Motor neuron (in vitro differentiated cells): ENCODE measurements at regions of chr4 and their contacts with region 1.

Region 1: DNA sequence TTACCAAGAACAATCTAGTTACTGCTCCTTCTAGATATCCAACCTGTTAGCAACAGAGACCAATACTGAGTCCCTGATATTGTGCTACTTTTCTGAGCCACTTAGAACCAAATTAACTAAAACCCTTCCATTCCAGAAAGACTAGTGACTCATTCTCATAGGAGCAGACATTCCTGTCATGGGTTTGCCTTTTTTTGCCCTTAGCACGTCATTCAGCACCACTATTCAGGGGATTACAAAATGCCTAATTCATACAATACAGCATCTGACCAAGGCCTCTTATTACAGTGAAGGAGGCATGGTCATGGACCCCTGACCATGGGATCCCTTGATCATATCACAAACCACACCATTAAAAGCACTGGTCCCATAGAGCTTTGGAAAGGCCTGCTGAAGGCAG is 123.8 kb upstream of the CXCL13 start:
- ATAC-seq: peak in 2 of 8 experiments; percentile 99
- H3K4me3 ChIP-seq: no peak overlapping the region
- H3K27ac ChIP-seq: no peak overlapping the region
- H3K4me1 ChIP-seq: no peaks in the 10 kb centered on the region

Region 2: GRCh38 chr4:76654791-76655190 is 827.1 kb before region 1 on chr4:
- in situ Hi-C with region 1: no loop called
- ATAC-seq: no peak
- H3K4me3 ChIP-seq: no peak overlapping the region
- H3K27ac ChIP-seq: no peak overlapping the region
- H3K4me1 ChIP-seq: no peaks in the 10 kb centered on the region

Region 3: DNA sequence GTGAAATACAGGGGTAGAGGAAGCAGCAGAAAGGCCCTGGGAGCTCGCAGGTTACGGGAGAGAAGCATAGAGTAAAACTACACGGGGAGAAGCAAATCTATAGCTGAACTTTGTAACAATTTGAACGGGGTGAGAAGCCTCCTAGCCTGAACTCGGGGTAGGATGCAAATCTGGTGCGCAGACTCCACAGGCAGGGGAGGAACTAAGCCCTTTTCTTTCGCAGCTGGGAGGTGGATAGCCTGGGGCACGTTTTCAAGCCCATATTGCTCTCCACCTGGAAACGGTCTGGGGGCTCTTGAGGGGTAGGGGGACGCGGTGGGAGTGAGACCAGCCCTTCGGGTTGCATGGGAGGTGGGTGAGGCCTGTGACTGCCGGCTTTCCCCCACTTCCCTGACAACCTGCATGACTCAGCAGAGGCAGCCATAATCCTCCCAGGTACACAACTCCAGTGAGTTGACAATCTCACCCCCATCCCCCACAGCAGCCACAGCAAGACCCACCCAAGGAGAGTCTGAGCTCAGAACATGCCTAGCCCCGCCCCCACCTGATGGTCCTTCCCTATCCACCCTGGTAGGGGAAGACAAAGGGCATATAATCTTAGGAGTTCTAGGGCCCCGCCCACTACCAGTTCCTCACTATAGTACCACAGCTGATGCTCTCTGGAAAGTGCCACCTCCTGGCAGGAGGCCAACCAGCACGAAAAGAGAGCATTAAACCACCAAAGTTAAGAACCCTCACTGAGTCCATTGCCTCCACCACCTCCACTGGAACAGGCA is 613.8 kb before region 1 on chr4:
- in situ Hi-C with region 1: no loop called
- ATAC-seq: no peak
- H3K4me3 ChIP-seq: no peak overlapping the region
- H3K27ac ChIP-seq: no peak overlapping the region
- H3K4me1 ChIP-seq: no peaks in the 10 kb centered on the region

Region 4: GRCh38 chr4:77600521-77601451 is 118.9 kb after region 1 on chr4:
- in situ Hi-C with region 1: loop called in 1 of 9 experiments (anchors 10 kb)
- ATAC-seq: peak in 4 of 8 experiments; percentile 52 to 68 (median 60)
- H3K4me3 ChIP-seq: no peak overlapping the region
- H3K27ac ChIP-seq: no peak overlapping the region
- H3K4me1 ChIP-seq: no peaks in the 10 kb centered on the region